ENCODE measurements at regions of chr17 and their contacts with region 1.

Region 1: GRCh38 chr17:44170499-44171201 is at the start of gene ASB16:
- DNase-seq: no peak
- ATAC-seq: no peak; the same call in 1 of the 2 replicates
- H3K4me3 ChIP-seq: no peak within 1 kb of the TSS
- H3K27ac ChIP-seq: no peak within 1 kb of the TSS
- H3K4me1 ChIP-seq: peaks cover 9% of the 10 kb centered on the region
- H3K27me3 ChIP-seq: no peaks in the 10 kb centered on the region
- CTCF ChIP-seq: no peak
- total RNA-seq, gene ASB16: 0.35 and 0.51 TPM in 2 replicates

Region 2: GRCh38 chr17:44063704-44064639 is 106.7 kb before region 1 on chr17:
- CTCF ChIA-PET with region 1: interaction called, 3 read pairs
- POLR2A ChIA-PET with region 1: interaction called, 16 read pairs
- intact Hi-C with region 1: no loop called
- DNase-seq: no peak
- ATAC-seq: no peak
- H3K4me3 ChIP-seq: peak overlapping the region; percentile 36
- H3K27ac ChIP-seq: no peak overlapping the region
- H3K4me1 ChIP-seq: peaks cover 22% of the 10 kb centered on the region
- H3K27me3 ChIP-seq: no peaks in the 10 kb centered on the region
- CTCF ChIP-seq: no peak

Region 3: DNA sequence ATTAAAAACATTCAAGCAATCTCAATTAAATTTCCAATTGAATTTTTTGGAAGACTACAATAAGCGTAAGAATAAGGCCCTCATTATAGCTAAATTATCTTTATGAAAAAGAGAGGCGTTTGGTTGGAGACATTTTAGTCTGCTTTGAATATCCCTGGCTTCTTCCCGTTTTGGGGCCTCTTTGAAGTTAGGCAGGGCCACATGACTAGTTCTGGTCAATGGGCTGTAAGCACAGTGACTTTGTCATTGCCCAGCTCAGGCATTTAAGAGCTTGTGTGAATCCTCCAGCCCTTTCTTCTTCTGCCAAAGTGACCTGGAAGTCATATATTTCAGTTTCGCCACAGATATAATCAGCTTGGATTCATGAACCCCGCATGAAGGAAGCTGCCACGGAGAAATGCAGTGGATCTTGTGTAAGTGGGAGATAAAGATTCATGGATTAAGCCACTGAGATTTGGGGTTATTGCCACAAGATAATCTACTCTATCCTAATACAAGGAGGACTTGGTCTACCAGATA is 70.5 kb after region 1 on chr17:
- CTCF ChIA-PET with region 1: no interaction called
- POLR2A ChIA-PET with region 1: no interaction called
- intact Hi-C with region 1: no loop called
- DNase-seq: no peak
- ATAC-seq: no peak
- H3K4me3 ChIP-seq: no peak overlapping the region
- H3K27ac ChIP-seq: no peak overlapping the region
- H3K4me1 ChIP-seq: peaks cover 3% of the 10 kb centered on the region; the same call in 1 of the 2 replicates
- H3K27me3 ChIP-seq: no peaks in the 10 kb centered on the region
- CTCF ChIP-seq: no peak

Region 4: GRCh38 chr17:44266402-44267164 is 95.9 kb after region 1 on chr17:
- CTCF ChIA-PET with region 1: no interaction called
- POLR2A ChIA-PET with region 1: no interaction called
- intact Hi-C with region 1: no loop called
- DNase-seq: peak; percentile 25
- ATAC-seq: peak; percentile 43; the same call in 1 of the 2 replicates
- H3K4me3 ChIP-seq: no peak overlapping the region
- H3K27ac ChIP-seq: no peak overlapping the region
- H3K4me1 ChIP-seq: no peaks in the 10 kb centered on the region
- H3K27me3 ChIP-seq: no peaks in the 10 kb centered on the region
- CTCF ChIP-seq: peak; percentile 29; the same call in 1 of the 2 replicates